Activated naive CD4-positive, alpha-beta T cell treated with anti-CD3 and anti-CD28 coated beads for 36 hours (primary cell): ENCODE measurements at regions of chr7 and their contacts with region 1.

Region 1: DNA sequence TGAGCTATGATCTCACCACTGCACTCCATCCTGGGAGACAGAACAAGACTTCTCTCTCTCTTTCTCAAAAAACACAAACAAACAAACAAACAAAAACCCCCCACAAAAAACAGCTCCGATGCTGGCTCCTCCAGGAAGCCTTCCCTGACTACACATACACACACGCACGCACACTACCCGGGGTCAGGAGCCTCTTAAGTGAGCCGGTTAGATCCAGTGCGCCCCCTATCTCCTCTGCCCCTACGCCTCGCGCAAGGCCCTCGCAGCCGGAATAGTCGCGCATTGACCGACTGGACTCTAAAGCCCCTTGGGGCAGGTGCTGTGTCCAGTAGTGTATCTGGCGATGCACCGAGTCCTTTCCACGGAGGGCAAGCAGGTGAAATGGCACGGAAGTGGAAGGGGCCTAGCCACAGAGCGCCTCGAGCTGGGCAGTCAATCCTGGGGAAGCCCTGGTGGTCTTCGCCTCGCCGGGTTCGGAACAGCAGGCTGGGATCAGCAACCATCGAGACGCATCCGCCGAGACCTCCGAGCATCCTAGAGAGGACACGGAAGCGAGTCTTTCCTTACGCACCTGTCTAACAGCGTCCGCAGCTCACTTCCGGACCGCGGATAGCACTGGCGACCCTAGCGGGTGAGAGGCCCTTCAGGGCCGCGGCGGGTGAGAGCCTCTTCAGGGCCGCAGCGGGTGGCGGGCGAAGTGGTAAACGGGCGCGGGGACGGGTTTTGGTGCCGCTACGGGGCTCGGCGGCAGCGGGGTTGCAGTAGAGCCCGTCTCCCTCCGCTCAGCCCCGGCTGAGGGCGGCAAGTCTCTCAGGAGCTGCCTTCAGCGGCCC is at the start of gene ZSCAN25:
- DNase-seq: peak; percentile 91
- H3K4me3 Mint-ChIP-seq: peak within 1 kb of the TSS; percentile 95
- H3K27ac Mint-ChIP-seq: peak within 1 kb of the TSS; percentile 92
- H3K4me1 Mint-ChIP-seq: peaks cover 35% of the 10 kb centered on the region
- H3K27me3 Mint-ChIP-seq: no peaks in the 10 kb centered on the region
- total RNA-seq, gene ZSCAN25: 20.7 to 22.3 TPM

Region 2: DNA sequence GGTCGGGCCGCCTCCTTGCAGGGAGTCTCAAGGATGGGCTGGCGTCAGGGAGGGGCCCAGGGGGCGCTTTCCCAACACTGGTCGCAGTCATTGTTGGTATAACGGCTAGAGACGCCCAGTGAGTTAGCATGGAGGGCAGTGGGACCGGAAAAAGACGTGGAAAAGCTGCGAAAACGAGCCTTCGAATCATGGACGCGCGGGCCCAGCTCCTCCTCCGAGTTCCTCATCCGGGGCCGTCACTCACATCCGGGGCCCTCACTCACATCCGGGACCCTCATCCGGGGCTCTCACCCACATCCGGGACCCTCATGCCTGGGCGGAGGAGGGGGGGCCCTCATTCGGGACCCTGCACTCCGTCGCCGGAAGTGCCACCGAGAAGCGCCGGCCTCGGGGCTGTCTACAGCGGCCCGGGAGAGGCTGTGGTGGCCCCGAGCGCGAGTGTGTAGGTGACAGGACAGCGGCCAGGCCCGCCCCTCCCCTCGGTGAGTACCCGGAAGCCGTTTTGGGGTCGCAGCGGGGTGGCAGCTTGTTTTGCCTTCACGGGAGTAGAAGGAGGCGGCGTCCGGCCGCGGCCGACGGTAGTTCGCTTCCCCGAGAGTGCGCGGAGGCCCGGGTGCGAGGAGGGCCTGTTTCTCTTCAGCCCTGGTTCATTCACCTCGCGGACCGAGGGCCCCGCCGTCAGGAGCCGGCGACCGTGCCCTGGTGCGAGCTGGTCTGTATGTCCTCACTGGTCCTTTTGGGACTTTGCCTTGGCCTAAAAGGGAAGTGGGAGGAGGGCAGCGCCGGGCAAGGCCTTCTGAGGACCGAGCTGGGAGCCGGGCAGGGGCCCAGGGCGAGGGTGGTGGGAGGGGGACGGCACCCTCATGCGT is 58.0 kb before region 1 on chr7 and contains the start of gene ZNF655:
- CTCF ChIA-PET with region 1: interaction called, 3 read pairs
- intact Hi-C with region 1: loop called (anchors 2 kb)
- DNase-seq: peak; percentile 89
- H3K4me3 Mint-ChIP-seq: peak within 1 kb of the TSS; percentile 91
- H3K27ac Mint-ChIP-seq: peak within 1 kb of the TSS; percentile 96
- H3K4me1 Mint-ChIP-seq: peaks cover 53% of the 10 kb centered on the region
- H3K27me3 Mint-ChIP-seq: no peaks in the 10 kb centered on the region
- total RNA-seq, gene ZNF655: 35.8 to 39.6 TPM

Region 3: GRCh38 chr7:99588868-99589267 is 27.7 kb before region 1 on chr7:
- CTCF ChIA-PET with region 1: no interaction called
- intact Hi-C with region 1: no loop called
- DNase-seq: no peak
- H3K4me3 Mint-ChIP-seq: no peak overlapping the region
- H3K27ac Mint-ChIP-seq: no peak overlapping the region
- H3K4me1 Mint-ChIP-seq: no peaks in the 10 kb centered on the region
- H3K27me3 Mint-ChIP-seq: no peaks in the 10 kb centered on the region